A673 (cell line): ENCODE measurements at regions of chr6 and their contacts with region 1.

Region 1: DNA sequence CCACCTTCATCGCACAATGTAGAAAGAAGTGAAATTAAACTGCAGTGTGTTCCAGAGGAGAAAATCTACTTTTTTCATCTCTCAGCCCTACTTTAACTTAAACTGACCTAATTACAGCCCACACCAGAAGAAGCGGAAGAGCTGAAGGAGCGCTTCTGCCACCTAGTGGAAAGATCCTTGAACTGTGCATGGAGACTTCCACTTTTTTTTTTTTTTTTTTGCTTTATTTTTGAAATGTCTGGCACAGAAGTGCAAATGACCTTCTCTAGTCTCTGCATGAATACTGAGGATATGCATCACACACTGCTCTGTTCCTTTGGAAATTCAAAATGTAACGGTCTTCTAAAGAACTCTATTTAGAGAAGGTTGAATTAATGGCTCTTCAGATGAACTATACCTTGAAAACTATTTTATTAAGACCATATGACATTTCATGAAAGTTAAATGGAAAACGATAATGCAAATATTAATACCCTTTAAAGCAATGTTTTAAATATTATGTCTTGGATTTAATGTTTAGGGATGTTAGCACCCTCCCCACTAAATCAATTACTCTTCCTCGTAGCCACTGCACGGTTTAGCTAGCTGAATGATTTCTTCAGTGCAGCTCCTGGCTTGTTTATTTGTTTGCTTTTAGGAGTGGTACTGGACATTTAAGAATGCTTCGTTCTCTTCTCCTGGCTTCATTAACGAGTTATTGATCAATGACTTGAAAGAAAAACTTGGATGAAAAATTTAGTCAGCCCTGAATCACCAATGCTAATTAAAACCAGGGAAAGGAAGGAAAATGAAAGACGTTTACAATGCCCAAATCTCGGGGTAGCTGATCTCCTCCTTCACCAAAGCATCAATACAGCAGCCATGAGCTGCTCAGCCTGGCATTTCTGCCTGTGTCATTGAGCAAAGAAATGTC is 569.6 kb upstream of the GJE1 start:
- DNase-seq: peak; percentile 93
- H3K4me3 ChIP-seq: peak overlapping the region; percentile 6
- H3K27ac ChIP-seq: peak overlapping the region; percentile 87
- H3K4me1 ChIP-seq: peaks cover 36% of the 10 kb centered on the region
- H3K27me3 ChIP-seq: no peaks in the 10 kb centered on the region
- CTCF ChIP-seq: peak; percentile 92

Region 2: DNA sequence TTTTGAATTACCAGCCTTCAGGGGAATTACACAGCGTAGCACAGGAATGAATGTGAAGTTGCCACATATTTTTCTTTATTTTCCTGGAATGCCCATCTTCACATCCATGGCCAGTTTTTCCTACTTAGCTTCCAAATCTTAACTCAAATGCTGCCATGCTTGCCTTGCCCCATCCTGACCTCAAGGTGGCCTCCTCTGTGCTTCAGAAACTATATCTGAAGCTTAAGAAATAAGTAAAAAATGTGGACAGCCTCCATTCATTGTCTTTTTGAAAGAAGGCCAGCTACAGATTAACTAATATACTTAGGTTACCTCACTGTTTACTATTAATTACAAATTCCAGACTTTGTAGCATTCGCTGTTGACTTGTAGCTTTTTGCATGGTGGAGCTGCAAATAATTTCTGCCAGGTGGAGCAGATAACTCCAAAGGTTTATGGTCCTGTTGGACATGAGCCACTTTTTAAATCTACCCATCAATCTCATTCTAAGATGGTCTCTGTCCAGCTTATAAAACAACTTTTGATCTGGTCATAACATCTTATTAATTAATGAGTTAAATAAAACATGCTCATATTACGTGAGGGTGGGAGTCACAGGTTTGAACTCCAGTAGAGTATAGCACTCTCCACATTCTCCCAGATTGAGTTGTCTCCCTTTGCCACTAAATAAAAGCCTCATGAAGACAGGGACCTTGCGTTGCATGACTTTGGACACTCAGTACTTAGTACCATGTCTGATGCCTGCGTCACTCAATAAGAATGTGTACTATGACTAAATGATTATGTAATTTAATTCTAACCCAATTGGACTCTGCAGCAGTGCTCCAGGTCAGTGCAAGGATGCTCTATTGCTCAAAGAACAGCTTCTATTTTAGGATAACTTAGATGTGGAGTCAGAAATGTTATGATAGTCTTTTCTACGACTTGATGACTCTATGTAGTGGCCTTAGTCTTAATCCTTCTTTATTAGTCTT is 1510.1 kb before region 1 on chr6:
- CTCF ChIA-PET with region 1: no interaction called
- POLR2A ChIA-PET with region 1: no interaction called
- intact Hi-C with region 1: loop called (anchors 2 kb)
- DNase-seq: peak; percentile 79
- H3K4me3 ChIP-seq: no peak overlapping the region
- H3K27ac ChIP-seq: peak overlapping the region; percentile 98
- H3K4me1 ChIP-seq: peaks cover 50% of the 10 kb centered on the region
- H3K27me3 ChIP-seq: no peaks in the 10 kb centered on the region
- CTCF ChIP-seq: peak; percentile 71

Region 3: DNA sequence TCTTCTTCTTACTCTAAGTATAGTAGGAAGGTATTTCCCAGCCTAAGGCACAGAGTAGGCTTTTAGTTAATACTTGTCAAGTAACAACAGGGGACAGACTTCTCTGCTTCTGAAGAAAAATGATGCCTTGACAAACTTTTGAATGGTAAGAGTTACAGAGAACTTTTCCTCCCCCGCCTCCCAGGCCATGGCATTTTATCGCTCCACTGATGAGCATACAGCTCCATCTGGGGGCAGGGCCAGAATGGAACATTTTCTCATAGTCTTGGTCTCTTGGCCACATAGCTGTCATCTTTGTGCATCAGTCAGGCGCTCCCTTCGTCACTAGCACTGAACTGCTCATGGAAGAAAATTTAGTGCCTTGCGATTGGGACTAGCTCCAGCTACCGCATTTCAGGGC is 1121.9 kb before region 1 on chr6:
- CTCF ChIA-PET with region 1: interaction called, 3 read pairs
- POLR2A ChIA-PET with region 1: no interaction called
- intact Hi-C with region 1: loop called (anchors 5 kb)
- DNase-seq: peak; percentile 93
- H3K4me3 ChIP-seq: no peak overlapping the region
- H3K27ac ChIP-seq: peak overlapping the region; percentile 78
- H3K4me1 ChIP-seq: peaks cover 47% of the 10 kb centered on the region
- H3K27me3 ChIP-seq: no peaks in the 10 kb centered on the region
- CTCF ChIP-seq: peak; percentile 70

Region 4: DNA sequence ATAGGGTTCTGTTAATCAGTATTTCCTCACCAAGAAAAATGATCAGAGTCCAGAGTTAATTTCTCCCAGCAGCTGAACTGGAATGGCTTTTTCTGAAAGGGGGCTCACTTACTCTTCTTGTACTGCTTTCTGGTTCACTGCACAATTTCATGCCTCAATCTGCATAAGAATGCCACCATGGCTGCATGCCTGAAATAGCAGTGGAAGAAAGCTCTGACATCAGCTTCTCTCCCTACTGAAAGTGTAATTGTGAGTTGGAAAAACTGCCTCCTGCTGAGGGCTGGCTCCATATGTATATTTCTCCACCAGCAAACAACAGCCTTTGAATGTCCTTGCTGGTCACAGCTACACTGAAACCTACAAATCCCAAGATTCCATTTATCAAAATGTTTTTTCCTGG is 457.6 kb before region 1 on chr6:
- CTCF ChIA-PET with region 1: no interaction called
- POLR2A ChIA-PET with region 1: no interaction called
- intact Hi-C with region 1: loop called (anchors 10 kb)
- DNase-seq: peak; percentile 94
- H3K4me3 ChIP-seq: no peak overlapping the region
- H3K27ac ChIP-seq: peak overlapping the region; percentile 68
- H3K4me1 ChIP-seq: peaks cover 12% of the 10 kb centered on the region
- H3K27me3 ChIP-seq: no peaks in the 10 kb centered on the region
- CTCF ChIP-seq: no peak

Region 5: GRCh38 chr6:141401851-141402250 is 161.3 kb before region 1 on chr6:
- CTCF ChIA-PET with region 1: interaction called, 10 read pairs
- POLR2A ChIA-PET with region 1: no interaction called
- intact Hi-C with region 1: no loop called
- DNase-seq: no peak
- H3K4me3 ChIP-seq: no peak overlapping the region
- H3K27ac ChIP-seq: no peak overlapping the region
- H3K4me1 ChIP-seq: no peaks in the 10 kb centered on the region
- H3K27me3 ChIP-seq: no peaks in the 10 kb centered on the region
- CTCF ChIP-seq: no peak

Region 6: GRCh38 chr6:141498977-141499376 is 64.1 kb before region 1 on chr6:
- CTCF ChIA-PET with region 1: no interaction called
- POLR2A ChIA-PET with region 1: no interaction called
- intact Hi-C with region 1: no loop called
- DNase-seq: no peak
- H3K4me3 ChIP-seq: no peak overlapping the region
- H3K27ac ChIP-seq: no peak overlapping the region
- H3K4me1 ChIP-seq: no peaks in the 10 kb centered on the region
- H3K27me3 ChIP-seq: no peaks in the 10 kb centered on the region
- CTCF ChIP-seq: no peak

Region 7: GRCh38 chr6:141634269-141634668 is 71.2 kb after region 1 on chr6:
- CTCF ChIA-PET with region 1: no interaction called
- POLR2A ChIA-PET with region 1: no interaction called
- intact Hi-C with region 1: loop called (anchors 2 kb)
- DNase-seq: no peak
- H3K4me3 ChIP-seq: no peak overlapping the region
- H3K27ac ChIP-seq: peak overlapping the region; percentile 100
- H3K4me1 ChIP-seq: peaks cover 48% of the 10 kb centered on the region
- H3K27me3 ChIP-seq: no peaks in the 10 kb centered on the region
- CTCF ChIP-seq: no peak